ENCODE measurements at regions of chr1 and their contacts with region 1.

Region 1: DNA sequence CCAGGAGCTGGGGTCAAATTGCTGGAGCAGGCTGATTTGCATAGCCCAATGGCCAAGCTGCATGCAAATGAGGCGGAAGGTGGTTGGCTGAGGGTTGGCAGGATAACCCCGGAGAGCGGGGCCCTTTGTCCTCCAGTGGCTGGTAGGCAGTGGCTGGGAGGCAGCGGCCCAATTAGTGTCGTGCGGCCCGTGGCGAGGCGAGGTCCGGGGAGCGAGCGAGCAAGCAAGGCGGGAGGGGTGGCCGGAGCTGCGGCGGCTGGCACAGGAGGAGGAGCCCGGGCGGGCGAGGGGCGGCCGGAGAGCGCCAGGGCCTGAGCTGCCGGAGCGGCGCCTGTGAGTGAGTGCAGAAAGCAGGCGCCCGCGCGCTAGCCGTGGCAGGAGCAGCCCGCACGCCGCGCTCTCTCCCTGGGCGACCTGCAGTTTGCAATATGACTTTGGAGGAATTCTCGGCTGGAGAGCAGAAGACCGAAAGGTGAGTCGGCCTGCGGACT is at the start of gene GADD45A:
- DNase-seq: peak; percentile 93 to 100 (median 98)

Region 2: GRCh38 chr1:67749844-67750689 is 65.0 kb after region 1 on chr1:
- intact Hi-C with region 1: loop called (anchors 10 kb)
- DNase-seq: peak in 6 of 42 donors; percentile 6 to 46 (median 28)

Region 3: DNA sequence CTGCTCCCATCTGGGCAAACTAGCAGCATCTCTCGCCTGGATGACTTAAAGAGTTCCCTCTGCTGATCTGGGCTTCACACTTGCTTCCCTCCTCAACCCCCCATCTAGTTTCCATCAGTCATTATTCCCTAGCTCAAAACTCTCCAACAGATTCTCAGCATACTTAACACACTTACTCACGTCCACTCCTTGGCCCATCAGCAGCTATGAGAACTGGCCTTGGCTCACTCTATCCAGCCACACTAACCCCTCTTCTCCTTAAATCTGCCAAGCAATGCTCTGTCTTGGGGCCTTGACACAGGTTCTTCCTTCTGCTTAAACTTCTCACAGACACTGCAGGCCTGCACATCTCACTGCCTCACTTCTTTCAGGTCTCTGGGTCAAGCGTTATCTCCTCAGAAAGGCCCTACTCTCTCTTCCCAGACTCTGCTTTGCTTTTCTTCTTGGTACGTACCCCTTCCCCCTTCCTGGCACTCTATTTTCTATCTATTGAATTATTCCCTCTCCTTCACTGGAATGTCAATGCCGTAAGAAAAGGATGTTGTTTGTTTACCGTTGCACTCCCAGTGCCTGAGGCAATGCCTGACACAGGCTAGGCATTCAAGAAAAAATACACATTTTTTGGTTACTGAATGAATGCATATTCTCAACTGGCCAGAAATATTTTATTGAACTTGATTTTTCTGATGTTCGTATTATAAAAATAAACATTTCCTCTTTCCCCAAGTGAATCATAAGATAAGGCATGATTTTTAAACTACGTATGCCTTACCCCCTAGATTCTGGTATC is 106.8 kb after region 1 on chr1:
- intact Hi-C with region 1: no loop called
- DNase-seq: no peak